ENCODE measurements at regions of chr5 and their contacts with region 1.

Region 1: DNA sequence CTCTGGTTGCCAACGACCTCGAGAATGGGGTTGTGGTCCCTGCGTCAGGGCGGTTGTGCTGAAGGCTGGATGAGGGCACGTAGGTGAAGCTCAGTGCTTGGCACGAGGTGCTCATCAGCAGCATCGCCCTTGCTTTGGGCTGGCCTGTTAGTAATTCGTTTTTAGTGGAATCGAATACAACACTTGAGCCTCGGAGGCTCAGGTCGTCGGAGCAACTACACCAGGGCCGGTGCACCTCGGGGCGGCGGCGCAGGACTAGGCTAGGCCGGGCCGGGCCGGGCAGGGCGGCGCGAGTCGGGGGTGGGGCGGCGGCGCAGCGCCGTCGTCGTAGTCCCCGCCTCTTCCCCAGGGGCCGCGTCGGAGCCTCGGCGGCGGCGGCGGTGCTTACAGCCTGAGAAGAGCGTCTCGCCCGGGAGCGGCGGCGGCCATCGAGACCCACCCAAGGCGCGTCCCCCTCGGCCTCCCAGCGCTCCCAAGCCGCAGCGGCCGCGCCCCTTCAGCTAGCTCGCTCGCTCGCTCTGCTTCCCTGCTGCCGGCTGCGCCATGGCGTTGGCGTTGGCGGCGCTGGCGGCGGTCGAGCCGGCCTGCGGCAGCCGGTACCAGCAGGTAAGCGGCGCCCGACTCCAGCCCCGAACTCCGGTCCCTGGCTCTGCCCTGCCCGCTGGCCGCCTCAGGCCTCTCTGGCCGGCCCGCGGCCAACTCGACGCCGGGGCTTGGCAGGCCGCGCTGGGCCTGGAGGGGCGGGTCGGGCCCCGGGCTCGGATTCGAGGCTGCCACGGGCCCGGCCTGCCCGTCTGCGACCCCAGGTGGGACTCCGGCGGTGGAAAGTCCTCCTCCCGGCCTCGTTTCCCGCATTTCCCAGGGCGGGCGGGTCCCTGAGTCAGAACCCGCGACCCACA is at the start of gene NDFIP1:
- DNase-seq: peak; percentile 85
- H3K4me3 Mint-ChIP-seq: peak within 1 kb of the TSS; percentile 98
- H3K27ac Mint-ChIP-seq: peak within 1 kb of the TSS; percentile 98
- H3K4me1 Mint-ChIP-seq: peaks cover 60% of the 10 kb centered on the region
- H3K27me3 Mint-ChIP-seq: no peaks in the 10 kb centered on the region
- total RNA-seq, gene NDFIP1: 118 and 121 TPM in 2 replicates

Region 2: DNA sequence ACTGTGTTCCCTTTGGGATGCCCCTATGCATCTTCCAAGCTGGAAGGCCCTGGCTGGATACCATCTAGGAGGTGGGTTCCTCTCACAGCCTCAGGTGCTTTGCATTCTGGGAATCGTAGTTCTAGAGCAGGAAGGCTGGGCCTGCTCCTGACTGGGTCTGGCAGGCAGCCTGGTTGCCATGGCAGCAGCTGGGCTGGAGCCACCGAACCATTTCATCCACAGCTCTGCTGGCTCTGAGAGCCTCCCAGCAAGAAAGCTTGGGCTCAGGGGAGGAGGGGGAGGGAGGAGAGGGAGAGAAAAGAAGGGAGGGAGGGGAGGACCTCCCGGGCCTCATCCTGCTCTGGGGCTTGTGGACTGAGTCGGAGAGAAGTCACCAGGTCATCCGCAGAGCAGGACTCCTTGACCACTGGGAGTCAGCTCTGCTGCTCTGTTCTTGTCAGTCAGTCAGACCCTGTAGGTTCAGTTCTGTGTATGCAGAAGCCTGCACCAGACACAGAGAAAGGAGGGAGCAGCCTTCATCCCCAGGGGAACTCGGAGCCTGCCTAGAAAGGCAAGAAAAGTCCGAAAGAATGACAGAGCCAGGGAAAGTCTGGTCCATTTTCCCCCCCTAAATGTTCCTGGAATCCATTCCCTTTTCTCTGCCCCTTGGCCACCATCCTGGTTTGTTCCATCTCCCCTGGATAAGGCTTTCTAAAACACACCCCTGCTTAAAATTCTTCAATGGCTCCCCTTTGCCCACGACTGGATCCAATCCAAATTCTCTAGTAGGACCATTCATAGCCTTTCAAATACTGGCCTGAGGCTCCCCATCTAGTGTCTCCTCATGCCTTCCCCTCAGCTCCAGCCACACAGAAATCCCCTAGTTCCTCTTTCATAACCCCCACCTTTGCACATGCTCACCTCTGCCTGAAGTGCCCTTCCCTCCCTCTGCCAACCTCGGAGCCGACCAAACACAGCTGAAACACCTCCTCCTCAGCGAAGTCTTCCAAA is 361.2 kb before region 1 on chr5:
- intact Hi-C with region 1: no loop called
- DNase-seq: no peak
- H3K4me3 Mint-ChIP-seq: no peak overlapping the region
- H3K27ac Mint-ChIP-seq: no peak overlapping the region
- H3K4me1 Mint-ChIP-seq: no peaks in the 10 kb centered on the region
- H3K27me3 Mint-ChIP-seq: peaks cover 15% of the 10 kb centered on the region

Region 3: GRCh38 chr5:141923448-141924352 is 185.0 kb before region 1 on chr5 and contains the start of gene DELE1:
- intact Hi-C with region 1: loop called (anchors 5 kb)
- DNase-seq: peak; percentile 91
- H3K4me3 Mint-ChIP-seq: peak within 1 kb of the TSS; percentile 88
- H3K27ac Mint-ChIP-seq: peak within 1 kb of the TSS; percentile 89
- H3K4me1 Mint-ChIP-seq: peaks cover 13% of the 10 kb centered on the region
- H3K27me3 Mint-ChIP-seq: no peaks in the 10 kb centered on the region
- total RNA-seq, gene DELE1: 74.1 and 76.8 TPM in 2 replicates

Region 4: GRCh38 chr5:141940695-141941271 is 167.9 kb before region 1 on chr5:
- intact Hi-C with region 1: no loop called
- DNase-seq: no peak
- H3K4me3 Mint-ChIP-seq: no peak overlapping the region
- H3K27ac Mint-ChIP-seq: no peak overlapping the region
- H3K4me1 Mint-ChIP-seq: peaks cover 13% of the 10 kb centered on the region
- H3K27me3 Mint-ChIP-seq: no peaks in the 10 kb centered on the region

Region 5: GRCh38 chr5:142073362-142073988 is 35.2 kb before region 1 on chr5:
- intact Hi-C with region 1: loop called (anchors 2 kb)
- DNase-seq: no peak
- H3K4me3 Mint-ChIP-seq: no peak overlapping the region
- H3K27ac Mint-ChIP-seq: peak overlapping the region; percentile 96
- H3K4me1 Mint-ChIP-seq: peaks cover 42% of the 10 kb centered on the region
- H3K27me3 Mint-ChIP-seq: no peaks in the 10 kb centered on the region

Region 6: GRCh38 chr5:142095651-142096330 is 12.9 kb before region 1 on chr5:
- intact Hi-C with region 1: loop called (anchors 1 kb)
- DNase-seq: peak; percentile 72
- H3K4me3 Mint-ChIP-seq: peak overlapping the region; percentile 14
- H3K27ac Mint-ChIP-seq: peak overlapping the region; percentile 88
- H3K4me1 Mint-ChIP-seq: peaks cover 44% of the 10 kb centered on the region
- H3K27me3 Mint-ChIP-seq: no peaks in the 10 kb centered on the region

Region 7: GRCh38 chr5:142125378-142125777 is 16.7 kb after region 1 on chr5:
- intact Hi-C with region 1: loop called (anchors 2 kb)
- DNase-seq: no peak
- H3K4me3 Mint-ChIP-seq: no peak overlapping the region
- H3K27ac Mint-ChIP-seq: no peak overlapping the region
- H3K4me1 Mint-ChIP-seq: peaks cover 53% of the 10 kb centered on the region
- H3K27me3 Mint-ChIP-seq: no peaks in the 10 kb centered on the region

Region 8: DNA sequence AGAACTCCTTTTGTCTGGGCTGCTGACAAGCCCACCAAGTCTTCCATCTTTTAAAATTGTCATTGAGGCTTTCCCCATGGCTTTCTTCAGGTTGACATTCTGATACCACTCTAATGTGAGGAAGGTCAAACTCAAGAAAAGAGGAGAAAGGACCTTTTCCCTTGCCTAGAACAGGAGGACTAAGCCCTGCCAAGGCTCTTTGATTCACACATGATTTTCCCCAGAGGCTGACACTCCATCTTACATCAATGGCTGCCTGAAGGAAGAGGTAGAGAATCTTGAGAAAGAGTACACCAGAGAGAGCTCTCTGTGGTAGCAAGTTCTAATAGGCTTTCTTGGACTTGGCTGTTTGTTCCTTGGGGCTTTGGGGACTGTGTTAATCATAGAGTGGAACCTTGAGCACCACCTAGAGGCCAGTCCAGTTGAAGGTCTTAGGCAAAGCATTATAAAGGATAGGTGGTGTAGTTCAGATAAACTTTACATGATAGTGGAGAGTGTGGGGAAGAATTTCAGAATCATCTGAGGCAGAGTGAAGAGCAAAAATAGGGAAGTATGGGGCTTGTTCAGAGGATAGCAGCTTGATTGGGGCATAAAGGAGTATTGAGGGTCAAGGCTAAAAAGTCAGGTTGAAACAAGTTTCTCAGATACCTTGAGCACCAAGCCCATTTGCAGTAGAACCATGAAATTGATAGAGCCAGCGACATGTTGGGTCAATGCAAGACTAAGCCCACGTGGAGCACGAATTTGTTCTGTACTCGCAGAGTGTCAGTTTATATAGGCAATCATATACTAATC is 36.6 kb after region 1 on chr5:
- intact Hi-C with region 1: loop called (anchors 2 kb)
- DNase-seq: peak; percentile 45
- H3K4me3 Mint-ChIP-seq: no peak overlapping the region
- H3K27ac Mint-ChIP-seq: no peak overlapping the region
- H3K4me1 Mint-ChIP-seq: peaks cover 3% of the 10 kb centered on the region
- H3K27me3 Mint-ChIP-seq: no peaks in the 10 kb centered on the region

Region 9: GRCh38 chr5:142156839-142157463 is 48.3 kb after region 1 on chr5:
- intact Hi-C with region 1: no loop called
- DNase-seq: no peak
- H3K4me3 Mint-ChIP-seq: no peak overlapping the region
- H3K27ac Mint-ChIP-seq: no peak overlapping the region
- H3K4me1 Mint-ChIP-seq: peaks cover 5% of the 10 kb centered on the region
- H3K27me3 Mint-ChIP-seq: no peaks in the 10 kb centered on the region

Measured in activated T-helper 2 cell treated with anti-CD3 and anti-CD28 coated beads, Interferon-gamma antibody, Interleukin-2, Interleukin-4, amounts not matched to agents 10 μg/mL and 5 μg/mL and 100 μg/mL, durations not matched to agents 14 hours and 24 hours and 36 hours (primary cell).